B cell (primary cell): ENCODE measurements at regions of chr11 and their contacts with region 1.

Region 1: GRCh38 chr11:103682318-103683184 is 353.9 kb upstream of the DDI1 start:
- DNase-seq: peak; percentile 65
- ATAC-seq: peak; percentile 75
- H3K4me3 ChIP-seq: no peak overlapping the region
- H3K4me3 Mint-ChIP-seq: no peak overlapping the region
- H3K27ac ChIP-seq: no peak overlapping the region
- H3K27ac Mint-ChIP-seq: no peak overlapping the region
- H3K4me1 ChIP-seq: peaks cover 0 to 6% of the 10 kb centered on the region in 2 donors
- H3K4me1 Mint-ChIP-seq: peaks cover 4% of the 10 kb centered on the region
- H3K27me3 ChIP-seq: peaks cover 0 to 7% (median 0%) of the 10 kb centered on the region in 4 experiments
- H3K27me3 Mint-ChIP-seq: peaks cover 3% of the 10 kb centered on the region
- CTCF ChIP-seq: peak; percentile 77

Region 2: GRCh38 chr11:103637295-103637694 is 45.3 kb before region 1 on chr11:
- CTCF ChIA-PET with region 1: no interaction called
- POLR2A ChIA-PET with region 1: no interaction called
- intact Hi-C with region 1: no loop called
- DNase-seq: no peak
- ATAC-seq: no peak
- H3K4me3 ChIP-seq: no peak overlapping the region
- H3K4me3 Mint-ChIP-seq: no peak overlapping the region
- H3K27ac ChIP-seq: no peak overlapping the region
- H3K27ac Mint-ChIP-seq: no peak overlapping the region
- H3K4me1 ChIP-seq: no peaks in the 10 kb centered on the region
- H3K4me1 Mint-ChIP-seq: no peaks in the 10 kb centered on the region
- H3K27me3 ChIP-seq: no peaks in the 10 kb centered on the region
- H3K27me3 Mint-ChIP-seq: no peaks in the 10 kb centered on the region
- CTCF ChIP-seq: no peak

Region 3: DNA sequence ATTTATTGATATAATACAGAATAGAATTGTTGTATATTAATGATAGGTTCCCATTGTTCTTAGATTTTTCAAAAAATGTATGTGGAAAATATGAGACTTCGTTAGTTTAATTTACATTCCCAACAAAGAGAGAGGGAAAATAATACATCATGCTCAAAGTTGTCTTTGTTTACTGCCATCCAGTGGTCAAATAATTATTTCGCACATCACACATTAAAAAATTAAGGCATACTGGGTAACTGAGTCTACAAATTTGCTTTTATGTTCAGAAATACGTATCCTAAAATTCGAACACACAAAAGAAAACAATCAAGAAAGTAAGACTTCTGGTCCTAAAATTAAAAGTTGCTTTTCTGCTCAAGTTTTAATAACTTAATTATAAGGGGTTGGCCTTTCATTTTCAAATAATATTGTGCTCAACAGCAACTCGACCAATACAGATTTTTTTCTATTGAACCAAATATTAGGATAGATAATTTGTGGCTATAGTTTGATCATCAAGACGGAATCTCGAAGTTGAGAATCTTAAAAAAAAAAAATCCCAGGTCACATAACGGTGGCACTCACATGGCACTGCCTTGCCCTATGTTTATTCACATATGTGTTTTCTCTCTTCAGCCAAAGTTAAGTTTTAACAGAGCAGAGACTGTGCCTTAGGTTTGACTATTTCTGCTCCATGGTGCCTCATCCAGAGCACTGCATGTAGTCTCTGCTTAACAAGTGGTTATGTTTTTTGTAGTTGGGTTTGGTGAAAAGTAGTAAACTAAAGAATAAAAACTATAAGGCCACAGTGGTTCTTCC is 469.1 kb after region 1 on chr11:
- CTCF ChIA-PET with region 1: interaction called, 5 read pairs
- POLR2A ChIA-PET with region 1: no interaction called
- intact Hi-C with region 1: loop called (anchors 2 kb)
- DNase-seq: peak; percentile 3
- ATAC-seq: no peak
- H3K4me3 ChIP-seq: no peak overlapping the region
- H3K4me3 Mint-ChIP-seq: no peak overlapping the region
- H3K27ac ChIP-seq: no peak overlapping the region
- H3K27ac Mint-ChIP-seq: no peak overlapping the region
- H3K4me1 ChIP-seq: no peaks in the 10 kb centered on the region
- H3K4me1 Mint-ChIP-seq: peaks cover 7% of the 10 kb centered on the region
- H3K27me3 ChIP-seq: no peaks in the 10 kb centered on the region
- H3K27me3 Mint-ChIP-seq: no peaks in the 10 kb centered on the region
- CTCF ChIP-seq: peak; percentile 30

Region 4: DNA sequence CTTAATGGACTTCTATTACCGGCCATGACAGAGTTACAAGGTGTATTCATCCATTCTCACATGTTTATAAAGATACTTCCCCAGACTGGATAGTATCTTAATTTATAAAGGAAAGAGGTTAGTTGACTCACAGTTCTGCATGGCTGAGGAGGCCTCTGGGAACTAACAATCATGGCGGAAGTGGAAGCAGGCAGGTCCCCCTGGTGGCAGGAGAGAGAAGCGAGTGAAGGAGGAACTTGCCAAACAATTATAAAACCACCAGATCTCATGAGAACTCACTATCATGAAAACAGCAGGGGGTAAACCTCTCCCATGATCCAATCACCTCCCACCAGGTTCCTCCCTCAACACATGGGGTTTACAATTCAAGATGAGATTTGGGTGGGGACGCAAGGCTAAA is 651.4 kb after region 1 on chr11:
- CTCF ChIA-PET with region 1: interaction called, 6 read pairs
- POLR2A ChIA-PET with region 1: no interaction called
- intact Hi-C with region 1: loop called (anchors 5 kb)
- DNase-seq: peak; percentile 10
- ATAC-seq: no peak
- H3K4me3 ChIP-seq: no peak overlapping the region
- H3K4me3 Mint-ChIP-seq: no peak overlapping the region
- H3K27ac ChIP-seq: no peak overlapping the region
- H3K27ac Mint-ChIP-seq: no peak overlapping the region
- H3K4me1 ChIP-seq: no peaks in the 10 kb centered on the region
- H3K4me1 Mint-ChIP-seq: peaks cover 1% of the 10 kb centered on the region
- H3K27me3 ChIP-seq: no peaks in the 10 kb centered on the region
- H3K27me3 Mint-ChIP-seq: peaks cover 3% of the 10 kb centered on the region
- CTCF ChIP-seq: peak; percentile 27

Region 5: DNA sequence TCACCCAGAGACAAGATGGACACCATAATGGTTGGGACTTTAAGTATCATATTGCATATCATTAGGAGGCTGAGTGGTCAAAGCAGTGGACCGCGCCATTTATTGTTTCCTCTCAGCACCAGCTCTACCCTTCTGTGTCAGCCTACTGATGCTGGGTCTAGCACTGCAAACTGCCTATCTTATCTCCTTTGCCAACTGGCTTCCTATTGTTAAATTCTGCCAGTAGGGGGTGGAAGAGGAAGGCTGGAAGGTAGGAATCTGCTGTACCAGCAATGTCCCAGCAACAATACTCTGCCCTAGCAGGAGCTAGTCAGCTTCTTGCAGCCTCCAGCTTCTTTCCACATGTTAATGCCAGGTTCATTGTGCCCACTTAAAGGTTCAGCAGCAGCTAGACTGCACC is 848.5 kb after region 1 on chr11:
- CTCF ChIA-PET with region 1: no interaction called
- POLR2A ChIA-PET with region 1: no interaction called
- intact Hi-C with region 1: loop called (anchors 5 kb)
- DNase-seq: peak; percentile 14
- ATAC-seq: no peak
- H3K4me3 ChIP-seq: no peak overlapping the region
- H3K4me3 Mint-ChIP-seq: no peak overlapping the region
- H3K27ac ChIP-seq: no peak overlapping the region
- H3K27ac Mint-ChIP-seq: no peak overlapping the region
- H3K4me1 ChIP-seq: no peaks in the 10 kb centered on the region
- H3K4me1 Mint-ChIP-seq: no peaks in the 10 kb centered on the region
- H3K27me3 ChIP-seq: no peaks in the 10 kb centered on the region
- H3K27me3 Mint-ChIP-seq: peaks cover 3% of the 10 kb centered on the region
- CTCF ChIP-seq: no peak